Ascending aorta (tissue), 2 donors: ENCODE measurements at regions of chr16 and their contacts with region 1.

Region 1: DNA sequence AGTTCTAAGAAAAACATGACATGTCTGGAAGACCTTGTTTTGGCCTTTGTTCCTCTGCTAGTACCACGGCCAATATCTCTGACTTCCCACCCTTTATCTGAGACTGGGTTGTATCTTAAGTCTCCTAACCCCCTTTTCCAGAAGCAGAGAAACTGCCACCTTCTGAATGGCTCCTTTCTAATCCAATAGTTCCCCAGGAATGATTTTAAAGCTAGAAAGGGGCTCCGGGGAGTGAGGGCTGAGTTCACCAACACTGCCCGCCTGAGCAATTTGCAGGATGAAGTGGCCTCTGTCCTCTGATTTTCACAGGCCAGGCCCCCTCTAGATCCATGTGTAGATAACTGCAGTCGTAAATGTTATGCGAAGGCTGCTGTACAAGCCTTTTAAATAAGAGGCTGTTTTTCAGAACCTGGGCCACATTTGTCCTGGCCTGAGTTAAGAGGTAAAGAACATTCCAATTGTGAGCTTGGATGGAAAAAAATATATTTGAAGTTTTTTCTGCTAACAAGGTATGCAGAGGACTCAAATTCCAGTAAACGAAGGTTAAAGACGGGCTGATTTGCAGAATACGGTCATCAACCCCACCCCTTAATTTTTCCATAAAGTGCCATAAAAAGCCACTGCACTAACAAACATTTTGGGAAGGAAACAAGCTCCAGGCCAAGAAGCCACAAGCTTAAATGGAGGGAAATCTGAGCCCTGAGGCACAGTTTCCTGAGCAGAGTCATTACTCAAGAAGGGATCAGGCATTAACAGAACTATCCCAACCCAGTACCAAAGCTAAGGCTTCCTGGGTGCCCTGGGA is 117.0 kb upstream of the MAF start:
- DNase-seq: no peak
- H3K4me3 ChIP-seq: peak overlapping the region in 1 of 2 donors; percentile 0
- H3K27ac ChIP-seq: peak overlapping the region; percentile 82 to 90
- H3K4me1 ChIP-seq: peaks cover 29 to 39% of the 10 kb centered on the region in 2 donors
- H3K27me3 ChIP-seq: no peaks in the 10 kb centered on the region
- CTCF ChIP-seq: no peak

Region 2: DNA sequence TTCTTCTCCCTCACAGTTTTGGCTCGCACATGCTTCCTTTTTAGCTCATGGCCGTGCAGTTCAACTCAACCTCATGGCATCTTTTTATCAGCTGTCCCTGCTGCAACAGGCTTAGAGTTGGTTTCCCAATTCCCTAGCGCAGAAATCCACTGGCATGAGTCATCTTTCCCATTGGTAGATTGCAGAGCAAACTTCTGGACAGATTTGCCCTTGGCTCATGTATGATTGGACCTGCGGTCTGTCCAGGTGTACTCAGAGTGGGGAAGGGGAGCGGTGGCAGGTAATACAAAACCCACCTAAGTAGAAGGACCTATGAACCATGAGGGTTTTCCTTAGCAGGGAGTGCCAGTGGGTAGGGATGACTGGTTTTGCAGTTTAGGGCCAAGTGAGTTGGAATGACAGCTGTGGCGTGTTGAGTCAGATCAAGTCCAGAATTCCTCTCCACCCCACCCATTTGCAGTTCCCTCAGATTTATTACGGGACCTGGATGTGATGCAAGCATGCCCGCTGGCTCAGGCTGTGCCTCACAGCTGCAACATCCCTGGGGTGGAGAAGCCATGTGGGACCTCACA is 1033.4 kb before region 1 on chr16:
- intact Hi-C with region 1: loop called (anchors 10 kb)
- DNase-seq: peak in 1 of 2 donors; percentile 89
- H3K4me3 ChIP-seq: no peak overlapping the region
- H3K27ac ChIP-seq: peak overlapping the region; percentile 57 to 58
- H3K4me1 ChIP-seq: peaks cover 0 to 13% of the 10 kb centered on the region in 2 donors
- H3K27me3 ChIP-seq: no peaks in the 10 kb centered on the region
- CTCF ChIP-seq: no peak

Region 3: GRCh38 chr16:79673635-79674034 is 43.9 kb before region 1 on chr16:
- intact Hi-C with region 1: loop called (anchors 5 kb)
- DNase-seq: no peak
- H3K4me3 ChIP-seq: no peak overlapping the region
- H3K27ac ChIP-seq: peak overlapping the region; percentile 21 to 75
- H3K4me1 ChIP-seq: peaks cover 4 to 22% of the 10 kb centered on the region in 2 donors
- H3K27me3 ChIP-seq: no peaks in the 10 kb centered on the region
- CTCF ChIP-seq: no peak

Region 4: DNA sequence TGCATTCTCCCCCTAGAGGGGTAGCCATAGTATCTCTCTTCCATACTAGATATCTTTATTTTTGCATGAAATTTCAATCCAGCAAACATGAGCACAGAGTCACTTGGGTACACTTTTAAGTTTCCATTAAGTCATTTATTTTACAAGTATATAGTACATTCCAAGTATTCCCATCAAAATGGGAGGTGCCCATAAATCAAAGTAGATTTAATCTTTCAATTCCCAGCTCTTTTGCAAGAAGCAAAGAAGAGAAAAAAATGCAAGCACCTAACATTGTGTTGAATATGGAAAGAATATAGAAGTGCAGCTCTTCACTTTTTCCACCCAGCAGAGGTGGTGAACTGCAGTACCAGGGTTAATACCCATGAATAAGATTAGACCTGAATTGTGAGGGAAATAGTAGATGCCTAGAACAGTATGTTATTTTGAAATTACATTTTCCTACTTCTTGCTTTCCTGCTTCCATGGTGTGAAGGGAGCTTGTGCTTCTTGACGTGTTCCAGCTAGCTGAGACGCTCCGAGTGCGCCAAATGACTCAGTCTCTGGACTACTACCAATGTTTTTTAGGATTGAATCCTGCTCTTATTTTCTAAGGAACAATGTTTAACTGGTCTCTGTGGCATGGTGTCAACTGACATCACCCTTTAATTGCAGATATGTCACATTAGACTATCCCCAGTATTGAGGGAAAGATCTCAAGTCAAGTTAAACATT is 34.1 kb after region 1 on chr16:
- intact Hi-C with region 1: loop called (anchors 5 kb)
- DNase-seq: peak in 1 of 2 donors; percentile 82
- H3K4me3 ChIP-seq: no peak overlapping the region
- H3K27ac ChIP-seq: peak overlapping the region in 1 of 2 donors; percentile 60
- H3K4me1 ChIP-seq: peaks cover 0 to 10% of the 10 kb centered on the region in 2 donors
- H3K27me3 ChIP-seq: no peaks in the 10 kb centered on the region
- CTCF ChIP-seq: no peak

Region 5: GRCh38 chr16:79770244-79771064 is 52.9 kb after region 1 on chr16:
- intact Hi-C with region 1: loop called (anchors 2 kb)
- DNase-seq: peak; percentile 51 to 94
- H3K4me3 ChIP-seq: peak overlapping the region; percentile 64 to 75
- H3K27ac ChIP-seq: peak overlapping the region; percentile 78 to 82
- H3K4me1 ChIP-seq: peaks cover 0 to 22% of the 10 kb centered on the region in 2 donors
- H3K27me3 ChIP-seq: no peaks in the 10 kb centered on the region
- CTCF ChIP-seq: no peak